ENCODE measurements at regions of chr14 and their contacts with region 1.

Region 1: DNA sequence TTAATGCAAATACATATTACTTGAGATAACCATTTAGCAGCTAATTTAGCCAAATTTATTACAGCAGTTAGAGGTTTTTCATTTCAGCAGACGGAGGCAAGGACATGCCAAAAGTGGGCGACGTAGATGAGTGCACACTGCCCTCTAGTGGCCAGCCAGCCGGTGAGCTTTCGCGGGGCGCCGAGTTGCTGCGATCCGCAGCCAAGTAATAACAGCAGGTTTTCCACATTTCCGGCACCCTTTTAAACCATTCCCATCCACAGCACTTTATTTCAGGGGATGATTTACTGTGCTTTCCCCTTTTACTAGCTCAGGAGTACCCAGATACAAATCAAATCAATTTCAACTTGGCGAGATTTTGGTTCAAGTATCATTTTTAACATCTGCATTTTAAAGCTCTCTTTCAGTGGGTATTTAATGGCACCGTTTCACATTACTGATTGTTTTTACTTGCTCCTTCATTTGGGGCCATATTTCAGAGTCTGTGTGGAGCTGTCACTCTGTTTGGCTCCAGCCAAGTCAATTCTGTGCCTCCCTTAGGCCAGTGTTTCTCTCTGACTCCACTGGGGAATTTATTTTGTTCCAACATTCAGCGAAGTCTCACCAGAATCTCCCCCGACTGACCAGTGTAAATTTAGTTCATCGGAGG is 158.0 kb downstream of the EGLN3 start:
- DNase-seq: peak; percentile 41
- H3K4me3 ChIP-seq: no peak overlapping the region
- H3K27ac ChIP-seq: no peak overlapping the region
- H3K27me3 ChIP-seq: peaks cover 6% of the 10 kb centered on the region
- CTCF ChIP-seq: peak; percentile 96

Region 2: DNA sequence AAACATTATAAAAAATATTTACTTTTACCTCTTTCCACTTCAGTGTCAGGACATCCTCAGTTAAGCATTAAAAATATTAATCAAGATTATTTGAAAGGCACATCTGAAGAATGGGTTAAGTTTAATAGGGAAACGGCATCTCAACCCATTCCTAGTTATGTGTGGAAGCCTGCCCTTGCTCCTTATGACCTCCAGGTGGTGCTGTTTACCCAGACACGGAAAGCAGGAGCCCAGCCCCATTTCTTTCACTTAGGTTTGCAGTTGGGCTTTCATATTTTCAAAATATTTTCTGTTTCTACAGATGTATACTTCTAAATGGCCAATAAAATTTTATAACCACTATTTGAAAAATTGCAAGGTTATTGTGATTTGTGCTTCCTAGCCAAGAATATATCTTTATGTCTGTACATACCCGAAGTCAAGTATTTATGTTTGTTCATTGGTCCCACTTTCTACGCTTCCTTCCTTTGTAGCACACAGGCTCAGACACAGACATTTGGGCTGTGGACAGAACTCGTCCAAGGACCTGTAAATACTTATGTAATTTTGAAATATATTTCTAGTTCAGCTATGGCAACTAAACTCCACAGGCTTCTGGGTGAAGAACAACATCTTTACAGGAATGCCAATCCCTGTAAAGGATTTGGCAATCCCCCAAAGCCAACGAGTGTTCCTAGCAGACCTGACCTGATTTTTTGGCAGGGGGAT is 1216.6 kb before region 1 on chr14:
- CTCF ChIA-PET with region 1: interaction called, 83 read pairs
- POLR2A ChIA-PET with region 1: no interaction called
- DNase-seq: no peak
- H3K4me3 ChIP-seq: no peak overlapping the region
- H3K27ac ChIP-seq: no peak overlapping the region
- H3K27me3 ChIP-seq: peaks cover 5% of the 10 kb centered on the region
- CTCF ChIP-seq: peak; percentile 98

Region 3: GRCh38 chr14:32588448-32589320 is 1204.2 kb before region 1 on chr14:
- CTCF ChIA-PET with region 1: interaction called, 16 read pairs
- POLR2A ChIA-PET with region 1: no interaction called
- DNase-seq: no peak
- H3K4me3 ChIP-seq: no peak overlapping the region
- H3K27ac ChIP-seq: no peak overlapping the region
- H3K27me3 ChIP-seq: peaks cover 3% of the 10 kb centered on the region
- CTCF ChIP-seq: peak; percentile 90

Region 4: DNA sequence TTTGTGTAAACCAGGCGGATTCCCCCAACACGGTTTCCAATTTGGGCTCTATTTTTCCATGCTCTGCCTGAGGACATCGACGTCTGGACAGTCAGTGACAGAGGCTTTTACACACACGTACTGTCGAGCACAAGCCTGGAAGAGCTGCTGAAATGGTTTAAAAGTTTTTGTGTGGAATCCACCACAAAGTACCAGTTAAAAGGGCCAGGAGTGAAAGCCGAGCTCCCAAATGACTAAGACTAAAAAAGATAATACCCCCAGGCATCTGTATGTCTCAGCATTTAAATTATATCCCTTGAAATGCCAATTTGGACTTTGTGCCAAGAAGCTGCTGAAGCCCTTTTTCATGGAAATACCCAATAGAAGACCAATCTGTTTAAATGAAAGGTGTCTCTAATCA is 15.2 kb before region 1 on chr14:
- CTCF ChIA-PET with region 1: interaction called, 41 read pairs
- POLR2A ChIA-PET with region 1: no interaction called
- DNase-seq: no peak
- H3K4me3 ChIP-seq: no peak overlapping the region
- H3K27ac ChIP-seq: no peak overlapping the region
- H3K27me3 ChIP-seq: no peaks in the 10 kb centered on the region
- CTCF ChIP-seq: no peak

Region 5: GRCh38 chr14:33805593-33805992 is 12.7 kb after region 1 on chr14:
- CTCF ChIA-PET with region 1: interaction called, 38 read pairs
- POLR2A ChIA-PET with region 1: no interaction called
- DNase-seq: no peak
- H3K4me3 ChIP-seq: no peak overlapping the region
- H3K27ac ChIP-seq: no peak overlapping the region
- H3K27me3 ChIP-seq: peaks cover 9% of the 10 kb centered on the region
- CTCF ChIP-seq: no peak

Region 6: DNA sequence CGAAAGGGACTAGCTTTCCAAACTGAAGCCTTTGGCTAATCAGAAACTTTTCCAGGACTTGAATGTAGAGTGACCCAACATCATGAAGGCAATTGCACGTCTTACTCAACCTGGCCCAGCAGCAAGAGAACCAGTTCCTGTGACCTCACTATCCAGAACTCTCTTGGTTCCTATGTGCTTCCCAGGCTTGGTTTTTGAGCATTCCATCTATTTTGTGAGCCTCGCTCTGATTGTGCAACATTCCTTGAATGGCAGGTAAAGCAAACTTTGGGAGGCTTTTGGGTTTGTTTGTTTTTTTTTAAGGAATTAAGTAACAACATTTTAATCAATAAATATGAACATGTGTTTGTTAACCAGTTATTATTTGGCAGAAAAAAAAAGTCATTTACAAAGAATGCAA is 341.7 kb after region 1 on chr14:
- CTCF ChIA-PET with region 1: no interaction called
- POLR2A ChIA-PET with region 1: no interaction called
- DNase-seq: no peak
- H3K4me3 ChIP-seq: no peak overlapping the region
- H3K27ac ChIP-seq: no peak overlapping the region
- H3K27me3 ChIP-seq: peaks cover 3% of the 10 kb centered on the region
- CTCF ChIP-seq: no peak

Measured in AG04450 (cell line).